ENCODE measurements at regions of chr17 and their contacts with region 1.

Region 1: DNA sequence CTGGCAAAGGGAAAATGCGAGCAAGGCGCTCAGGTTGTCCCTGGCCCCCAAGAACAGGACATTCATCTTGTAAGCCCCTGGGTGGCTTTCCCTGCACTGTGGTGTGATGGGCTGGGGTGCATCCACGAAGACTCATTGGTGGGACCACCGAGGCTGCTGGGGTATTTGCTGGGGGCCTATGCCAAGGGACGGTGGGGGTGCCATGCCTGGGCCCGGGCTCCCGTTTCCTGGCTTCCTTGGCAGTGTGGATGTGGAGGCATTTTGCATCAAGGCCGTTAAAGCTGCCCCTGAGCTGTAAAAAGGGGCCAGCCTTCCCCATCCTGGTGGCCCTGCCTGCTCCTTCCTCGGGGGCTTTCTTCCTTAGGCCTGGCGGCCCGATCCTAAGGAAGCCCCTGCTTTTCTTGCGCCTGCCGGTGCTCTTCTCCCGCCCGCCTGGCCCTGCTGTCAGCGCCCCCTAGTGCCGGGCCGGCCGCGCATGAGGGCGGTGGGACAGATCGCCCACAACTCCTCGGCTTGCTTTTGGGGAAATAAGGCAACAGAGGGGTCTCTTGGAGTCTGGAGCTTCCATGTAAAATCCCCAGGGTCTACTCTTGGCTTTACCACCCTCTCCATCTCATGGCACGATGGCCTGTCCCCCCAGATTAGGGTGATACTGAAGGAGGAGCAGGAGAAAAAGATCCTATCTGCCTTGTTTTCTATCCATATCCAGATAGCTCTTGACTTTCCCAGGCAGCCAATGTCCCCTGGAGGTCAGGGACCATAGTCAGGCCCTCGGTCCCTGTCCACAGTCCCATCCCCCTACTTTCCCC is 9.8 kb upstream of the TBX2 start:
- DNase-seq: no peak
- ATAC-seq: peak; percentile 88
- H3K4me3 ChIP-seq: no peak overlapping the region
- H3K27ac ChIP-seq: no peak overlapping the region
- H3K4me1 ChIP-seq: no peaks in the 10 kb centered on the region
- H3K27me3 ChIP-seq: no peaks in the 10 kb centered on the region; a peak in 2 of 4 replicates
- CTCF ChIP-seq: peak; percentile 67 to 94 (median 76)
- EP300 ChIP-seq: no peak
- POLR2A ChIP-seq: no peak
- RAD21 ChIP-seq: peak; percentile 77

Region 2: DNA sequence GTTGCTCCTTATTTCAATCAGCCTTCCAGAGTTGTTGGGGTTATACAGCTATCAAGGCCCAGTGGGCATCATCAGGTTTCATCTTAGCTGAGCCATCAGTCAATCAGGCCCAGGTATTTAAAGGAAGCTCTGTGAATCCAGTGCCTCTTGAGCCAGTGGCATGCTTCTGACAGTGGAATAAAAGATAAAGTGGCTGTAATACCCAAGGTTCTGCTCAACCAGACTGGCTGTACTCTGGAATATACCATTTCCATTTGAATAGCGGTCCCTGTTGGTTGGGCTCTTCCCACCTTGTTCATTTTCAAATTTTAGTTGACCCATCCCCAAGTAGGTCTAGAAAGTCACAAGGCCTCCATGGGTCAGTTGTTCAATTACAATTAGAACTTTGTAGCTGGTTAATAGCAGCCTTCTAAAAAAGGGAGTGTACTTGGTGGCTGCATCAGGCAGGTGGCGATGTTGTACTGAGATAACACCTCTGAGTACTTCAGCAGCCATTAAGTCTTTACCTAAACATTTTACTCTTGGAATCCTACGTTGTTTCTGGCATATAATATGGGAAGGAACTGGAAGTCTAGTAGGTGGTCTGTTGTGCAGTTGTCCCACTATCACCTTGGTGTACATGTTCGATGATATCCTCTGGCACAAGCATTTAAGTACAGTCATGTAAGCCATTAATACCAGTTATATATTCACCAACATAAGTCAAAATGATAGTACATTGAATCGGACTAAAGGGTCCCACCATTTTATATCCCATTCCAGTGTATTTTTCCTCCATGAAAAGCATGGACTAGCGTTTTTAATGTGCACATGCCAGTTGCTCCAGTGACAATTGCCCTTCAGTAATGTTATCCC is 418.1 kb before region 1 on chr17:
- CTCF ChIA-PET with region 1: interaction called, 4 read pairs
- POLR2A ChIA-PET with region 1: no interaction called
- RAD21 ChIA-PET with region 1: interaction called, 3 read pairs
- SMC1A ChIA-PET with region 1: interaction called, 3 read pairs
- in situ Hi-C with region 1: no loop called
- intact Hi-C with region 1: loop called (anchors 2 kb)
- DNase-seq: peak; percentile 4
- ATAC-seq: peak; percentile 91
- H3K4me3 ChIP-seq: no peak overlapping the region
- H3K27ac ChIP-seq: no peak overlapping the region
- H3K4me1 ChIP-seq: no peaks in the 10 kb centered on the region
- H3K27me3 ChIP-seq: no peaks in the 10 kb centered on the region
- CTCF ChIP-seq: peak; percentile 64 to 84 (median 69)
- EP300 ChIP-seq: no peak
- POLR2A ChIP-seq: no peak
- RAD21 ChIP-seq: peak; percentile 74

Region 3: GRCh38 chr17:61009663-61010062 is 380.2 kb before region 1 on chr17:
- CTCF ChIA-PET with region 1: no interaction called
- POLR2A ChIA-PET with region 1: no interaction called
- RAD21 ChIA-PET with region 1: no interaction called
- SMC1A ChIA-PET with region 1: no interaction called
- in situ Hi-C with region 1: loop called (anchors 5 kb)
- intact Hi-C with region 1: no loop called
- DNase-seq: peak; percentile 43
- ATAC-seq: peak; percentile 81
- H3K4me3 ChIP-seq: no peak overlapping the region
- H3K27ac ChIP-seq: no peak overlapping the region
- H3K4me1 ChIP-seq: peaks cover 4% of the 10 kb centered on the region; the same call in 1 of the 2 replicates
- H3K27me3 ChIP-seq: no peaks in the 10 kb centered on the region
- CTCF ChIP-seq: no peak
- EP300 ChIP-seq: no peak
- POLR2A ChIP-seq: no peak
- RAD21 ChIP-seq: no peak